BJ (cell line): ENCODE measurements at regions of chr6 and their contacts with region 1.

Region 1: DNA sequence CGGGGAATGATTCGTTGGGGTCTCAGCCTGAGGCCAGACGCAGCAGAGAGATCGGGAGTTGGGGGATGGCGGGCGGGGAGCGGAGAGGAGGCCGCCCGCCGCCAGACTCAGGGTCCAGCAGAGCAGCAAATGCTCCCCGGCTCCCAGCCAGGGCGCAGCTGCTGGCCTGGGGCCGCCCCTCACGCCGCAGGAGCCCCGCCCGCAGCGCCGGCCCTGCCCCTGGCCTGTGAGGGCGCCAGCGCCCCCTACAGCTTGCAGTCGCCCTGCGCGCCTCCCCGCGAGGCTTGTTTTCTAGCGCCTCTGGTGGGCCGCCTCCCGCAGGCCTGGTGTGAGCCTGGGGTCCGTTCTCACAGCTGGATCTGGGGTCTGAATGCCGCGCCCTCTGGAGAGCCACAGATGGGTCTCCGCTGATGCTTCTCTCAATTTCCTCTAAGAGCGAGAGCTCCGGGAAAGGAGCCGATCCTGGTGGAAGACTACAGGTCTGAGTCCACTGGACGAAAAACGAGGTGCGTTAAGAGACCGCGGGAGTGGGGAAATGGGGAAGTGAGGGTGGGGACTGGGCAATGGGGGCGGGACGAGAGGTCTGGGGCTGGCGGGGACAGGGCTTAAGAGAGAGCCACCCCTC is 29.9 kb downstream of the TRIM38 start:
- DNase-seq: peak; percentile 52
- H3K4me3 ChIP-seq: peak overlapping the region; percentile 57
- H3K27me3 ChIP-seq: no peaks in the 10 kb centered on the region
- CTCF ChIP-seq: peak; percentile 93

Region 2: GRCh38 chr6:25788305-25788922 is 204.1 kb before region 1 on chr6:
- CTCF ChIA-PET with region 1: interaction called, 10 read pairs
- POLR2A ChIA-PET with region 1: no interaction called
- DNase-seq: peak; percentile 1
- H3K4me3 ChIP-seq: no peak overlapping the region
- H3K27me3 ChIP-seq: no peaks in the 10 kb centered on the region
- CTCF ChIP-seq: peak; percentile 68

Region 3: GRCh38 chr6:25966711-25967110 is 25.8 kb before region 1 on chr6:
- CTCF ChIA-PET with region 1: interaction called, 13 read pairs
- POLR2A ChIA-PET with region 1: interaction called, 6 read pairs
- DNase-seq: no peak
- H3K4me3 ChIP-seq: no peak overlapping the region
- H3K27me3 ChIP-seq: no peaks in the 10 kb centered on the region
- CTCF ChIP-seq: no peak

Region 4: GRCh38 chr6:25975923-25976560 is 16.5 kb before region 1 on chr6:
- CTCF ChIA-PET with region 1: interaction called, 17 read pairs
- POLR2A ChIA-PET with region 1: interaction called, 5 read pairs
- DNase-seq: no peak
- H3K4me3 ChIP-seq: no peak overlapping the region
- H3K27me3 ChIP-seq: no peaks in the 10 kb centered on the region
- CTCF ChIP-seq: no peak

Region 5: GRCh38 chr6:25981568-25982263 is 10.8 kb before region 1 on chr6:
- CTCF ChIA-PET with region 1: interaction called, 17 read pairs
- POLR2A ChIA-PET with region 1: interaction called, 5 read pairs
- DNase-seq: no peak
- H3K4me3 ChIP-seq: no peak overlapping the region
- H3K27me3 ChIP-seq: no peaks in the 10 kb centered on the region
- CTCF ChIP-seq: no peak

Region 6: GRCh38 chr6:26003102-26003694 is 10.7 kb after region 1 on chr6:
- CTCF ChIA-PET with region 1: interaction called, 83 read pairs
- POLR2A ChIA-PET with region 1: no interaction called
- DNase-seq: no peak
- H3K4me3 ChIP-seq: no peak overlapping the region
- H3K27me3 ChIP-seq: no peaks in the 10 kb centered on the region
- CTCF ChIP-seq: peak; percentile 87

Region 7: DNA sequence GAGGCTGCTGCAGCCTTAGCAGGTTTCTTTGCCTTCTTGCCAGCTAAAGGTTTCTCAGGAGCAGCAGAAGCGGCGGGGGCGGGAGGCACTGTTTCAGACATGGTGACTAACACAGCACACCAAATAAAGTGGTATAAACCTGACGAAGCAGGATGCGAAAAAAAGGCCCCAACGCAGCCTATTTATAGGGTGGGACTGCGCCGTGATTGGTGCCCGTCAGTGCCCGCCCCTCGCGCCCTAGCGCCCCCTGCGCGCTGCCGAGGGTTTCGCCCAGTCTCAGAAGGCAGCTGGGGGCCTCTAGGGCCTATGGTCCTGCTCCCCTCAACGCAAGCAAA is 25.1 kb after region 1 on chr6:
- CTCF ChIA-PET with region 1: interaction called, 83 read pairs
- POLR2A ChIA-PET with region 1: interaction called, 3 read pairs
- DNase-seq: no peak
- H3K4me3 ChIP-seq: peak overlapping the region; percentile 26
- H3K27me3 ChIP-seq: no peaks in the 10 kb centered on the region
- CTCF ChIP-seq: peak; percentile 79